ENCODE measurements at regions of chr1 and their contacts with region 1.

Region 1: GRCh38 chr1:175035865-175036264 is 12.6 kb upstream of the MRPS14 start:
- DNase-seq: no peak
- ATAC-seq: no peak
- H3K4me3 ChIP-seq: no peak overlapping the region
- H3K27ac ChIP-seq: no peak overlapping the region
- H3K4me1 ChIP-seq: no peaks in the 10 kb centered on the region
- H3K27me3 ChIP-seq: no peaks in the 10 kb centered on the region

Region 2: DNA sequence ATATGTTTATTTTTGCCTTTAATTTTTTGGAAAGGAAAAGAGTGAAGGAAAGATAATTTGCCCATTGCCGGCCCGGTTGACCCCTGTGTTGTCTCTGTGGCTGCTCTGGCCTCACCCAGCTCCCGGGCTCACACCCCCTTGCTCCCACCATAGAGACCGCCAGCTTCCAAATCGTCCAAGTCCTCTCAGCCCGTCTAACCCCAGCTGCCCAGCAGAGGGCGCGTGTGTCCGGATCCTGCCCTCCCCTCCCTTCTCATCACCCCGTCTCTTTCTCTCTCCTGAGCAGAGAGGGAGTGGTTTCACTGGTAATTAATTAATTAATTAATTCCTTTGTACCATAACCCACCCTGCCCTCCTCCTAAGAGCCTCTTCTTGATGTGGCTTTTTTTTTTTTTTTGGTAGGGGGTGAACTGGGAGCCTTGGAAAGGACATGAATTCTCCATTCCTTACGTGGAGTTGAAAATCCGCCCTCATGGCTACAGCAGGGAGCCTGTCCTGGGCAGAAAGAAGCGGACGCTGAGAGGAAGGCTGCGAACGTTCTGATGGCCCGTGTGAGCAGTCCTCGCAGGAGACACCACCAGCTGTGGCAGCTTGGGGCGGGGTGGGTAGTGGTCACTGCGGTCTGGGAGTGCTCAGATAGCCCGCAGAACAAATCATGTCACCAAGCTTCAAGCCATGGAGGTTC is 110.8 kb after region 1 on chr1:
- intact Hi-C with region 1: loop called in 1 of 2 experiments (anchors 5 kb)
- DNase-seq: peak; percentile 77 to 89
- ATAC-seq: peak; percentile 78
- H3K4me3 ChIP-seq: no peak overlapping the region
- H3K27ac ChIP-seq: no peak overlapping the region
- H3K4me1 ChIP-seq: no peaks in the 10 kb centered on the region
- H3K27me3 ChIP-seq: no peaks in the 10 kb centered on the region

Region 3: GRCh38 chr1:175319418-175320230 is 283.8 kb after region 1 on chr1:
- intact Hi-C with region 1: loop called (anchors 5 to 10 kb)
- DNase-seq: peak; percentile 81 to 88
- ATAC-seq: peak; percentile 94
- H3K4me3 ChIP-seq: no peak overlapping the region
- H3K27ac ChIP-seq: no peak overlapping the region
- H3K4me1 ChIP-seq: no peaks in the 10 kb centered on the region
- H3K27me3 ChIP-seq: no peaks in the 10 kb centered on the region